PC-3 (cell line): ENCODE measurements at regions of chr19 and their contacts with region 1.

Region 1: DNA sequence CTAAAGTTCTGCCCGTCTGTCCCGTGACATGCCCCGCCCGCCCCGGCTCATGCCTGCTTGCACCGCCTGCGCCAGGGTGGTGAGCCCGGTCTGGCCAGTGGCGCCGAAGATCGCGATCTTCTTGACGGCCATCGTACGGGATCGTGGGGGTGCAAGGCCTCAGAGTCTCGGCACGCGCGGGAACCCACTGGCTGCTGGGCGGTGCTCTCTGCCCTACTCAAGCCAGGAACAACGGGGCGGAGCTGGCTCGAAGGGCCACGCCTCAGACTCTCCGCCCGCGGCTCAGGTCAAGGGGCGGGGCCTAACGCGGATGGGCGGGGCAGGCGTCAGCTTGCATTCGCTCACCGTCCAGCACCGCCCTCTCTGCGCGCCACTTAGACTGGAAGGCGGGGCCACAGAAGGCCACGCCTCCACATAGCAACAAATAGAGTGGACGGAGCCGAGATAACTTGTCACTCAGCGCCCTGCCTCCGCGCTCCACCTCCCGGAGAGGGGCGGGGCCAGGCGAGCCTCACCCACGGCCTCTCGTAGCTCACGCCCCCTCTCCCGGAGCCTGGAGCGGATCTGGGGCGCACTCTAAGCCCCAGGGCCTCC is at the start of gene BLVRB:
- DNase-seq: peak; percentile 99
- ATAC-seq: peak; percentile 85
- H3K4me3 ChIP-seq: peak within 1 kb of the TSS; percentile 89
- H3K27ac ChIP-seq: peak within 1 kb of the TSS; percentile 70
- H3K4me1 ChIP-seq: peaks cover 20% of the 10 kb centered on the region
- H3K27me3 ChIP-seq: no peaks in the 10 kb centered on the region
- CTCF ChIP-seq: no peak
- total RNA-seq, gene BLVRB: 196 and 246 TPM in 2 replicates

Region 2: DNA sequence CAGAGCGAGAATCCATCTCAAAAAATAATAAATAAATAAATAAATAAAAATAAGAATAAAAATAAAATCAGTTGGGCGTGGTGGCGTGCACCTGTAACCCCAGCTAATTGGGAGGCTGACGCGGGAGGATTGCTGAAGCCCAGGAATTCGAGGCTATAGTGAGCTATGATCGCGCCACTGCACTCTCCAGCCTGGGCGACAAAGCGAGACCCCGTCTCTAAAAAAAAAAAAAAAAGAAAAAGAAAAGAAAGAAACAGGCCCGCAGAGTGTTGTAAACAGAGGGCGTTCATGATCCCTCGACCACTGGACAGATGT is 45.2 kb before region 1 on chr19:
- CTCF ChIA-PET with region 1: interaction called, 6 read pairs
- POLR2A ChIA-PET with region 1: interaction called, 10 read pairs
- intact Hi-C with region 1: no loop called
- DNase-seq: no peak
- ATAC-seq: no peak
- H3K4me3 ChIP-seq: peak overlapping the region; percentile 76
- H3K27ac ChIP-seq: peak overlapping the region; percentile 70
- H3K4me1 ChIP-seq: peaks cover 10% of the 10 kb centered on the region
- H3K27me3 ChIP-seq: no peaks in the 10 kb centered on the region
- CTCF ChIP-seq: no peak

Region 3: GRCh38 chr19:40512473-40513344 is 47.1 kb after region 1 on chr19:
- CTCF ChIA-PET with region 1: no interaction called
- POLR2A ChIA-PET with region 1: no interaction called
- intact Hi-C with region 1: no loop called
- DNase-seq: no peak
- ATAC-seq: peak; percentile 35; the same call in 1 of the 2 replicates
- H3K4me3 ChIP-seq: no peak overlapping the region
- H3K27ac ChIP-seq: no peak overlapping the region
- H3K4me1 ChIP-seq: no peaks in the 10 kb centered on the region
- H3K27me3 ChIP-seq: no peaks in the 10 kb centered on the region
- CTCF ChIP-seq: no peak

Region 4: GRCh38 chr19:40523322-40524047 is 57.8 kb after region 1 on chr19:
- CTCF ChIA-PET with region 1: interaction called, 18 read pairs
- POLR2A ChIA-PET with region 1: no interaction called
- intact Hi-C with region 1: loop called (anchors 5 kb)
- DNase-seq: peak; percentile 66
- ATAC-seq: peak; percentile 78
- H3K4me3 ChIP-seq: no peak overlapping the region
- H3K27ac ChIP-seq: no peak overlapping the region
- H3K4me1 ChIP-seq: no peaks in the 10 kb centered on the region
- H3K27me3 ChIP-seq: no peaks in the 10 kb centered on the region
- CTCF ChIP-seq: peak; percentile 71

Region 5: GRCh38 chr19:40542202-40542859 is 76.7 kb after region 1 on chr19:
- CTCF ChIA-PET with region 1: interaction called, 14 read pairs
- POLR2A ChIA-PET with region 1: no interaction called
- intact Hi-C with region 1: no loop called
- DNase-seq: no peak
- ATAC-seq: no peak
- H3K4me3 ChIP-seq: no peak overlapping the region
- H3K27ac ChIP-seq: no peak overlapping the region
- H3K4me1 ChIP-seq: no peaks in the 10 kb centered on the region
- H3K27me3 ChIP-seq: no peaks in the 10 kb centered on the region
- CTCF ChIP-seq: no peak

Region 6: DNA sequence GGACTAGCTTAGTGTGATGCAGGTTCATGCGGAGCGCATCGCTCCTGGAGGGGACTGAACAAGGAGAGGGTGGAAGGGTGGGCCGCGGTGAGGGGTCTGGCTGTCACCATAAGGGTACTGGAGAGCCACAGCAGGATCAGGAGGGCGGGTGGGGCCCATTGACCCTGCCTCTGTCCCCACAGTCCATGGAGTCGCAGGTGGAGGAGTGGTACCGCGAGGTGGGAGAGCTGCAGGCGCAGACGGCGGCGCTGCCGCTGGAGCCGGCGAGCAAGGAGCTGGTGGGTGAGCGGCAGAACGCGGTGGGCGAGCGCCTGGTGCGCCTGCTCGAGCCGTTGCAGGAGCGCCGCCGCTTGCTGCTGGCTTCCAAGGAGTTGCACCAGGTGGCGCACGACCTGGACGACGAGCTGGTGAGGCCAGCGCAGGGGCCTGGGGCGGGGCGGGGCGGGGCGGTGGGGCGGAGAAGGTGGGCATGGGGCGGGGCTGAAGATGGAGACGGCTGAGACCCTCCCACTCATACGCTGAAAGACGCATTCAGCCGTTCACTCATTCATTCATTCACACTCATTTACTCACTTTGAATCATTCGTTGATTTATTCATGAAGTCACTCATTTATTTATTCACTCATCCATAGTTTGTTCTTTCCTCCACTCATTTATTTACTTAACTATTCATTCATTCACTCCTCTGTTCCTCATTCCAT is 83.5 kb after region 1 on chr19:
- CTCF ChIA-PET with region 1: interaction called, 11 read pairs
- POLR2A ChIA-PET with region 1: interaction called, 3 read pairs
- intact Hi-C with region 1: no loop called
- DNase-seq: peak; percentile 68
- ATAC-seq: peak; percentile 90
- H3K4me3 ChIP-seq: peak overlapping the region; percentile 49; the same call in 1 of the 2 replicates
- H3K27ac ChIP-seq: no peak overlapping the region
- H3K4me1 ChIP-seq: no peaks in the 10 kb centered on the region; the same call in 1 of the 2 replicates
- H3K27me3 ChIP-seq: no peaks in the 10 kb centered on the region
- CTCF ChIP-seq: peak; percentile 40; the same call in 1 of the 2 replicates

Region 7: DNA sequence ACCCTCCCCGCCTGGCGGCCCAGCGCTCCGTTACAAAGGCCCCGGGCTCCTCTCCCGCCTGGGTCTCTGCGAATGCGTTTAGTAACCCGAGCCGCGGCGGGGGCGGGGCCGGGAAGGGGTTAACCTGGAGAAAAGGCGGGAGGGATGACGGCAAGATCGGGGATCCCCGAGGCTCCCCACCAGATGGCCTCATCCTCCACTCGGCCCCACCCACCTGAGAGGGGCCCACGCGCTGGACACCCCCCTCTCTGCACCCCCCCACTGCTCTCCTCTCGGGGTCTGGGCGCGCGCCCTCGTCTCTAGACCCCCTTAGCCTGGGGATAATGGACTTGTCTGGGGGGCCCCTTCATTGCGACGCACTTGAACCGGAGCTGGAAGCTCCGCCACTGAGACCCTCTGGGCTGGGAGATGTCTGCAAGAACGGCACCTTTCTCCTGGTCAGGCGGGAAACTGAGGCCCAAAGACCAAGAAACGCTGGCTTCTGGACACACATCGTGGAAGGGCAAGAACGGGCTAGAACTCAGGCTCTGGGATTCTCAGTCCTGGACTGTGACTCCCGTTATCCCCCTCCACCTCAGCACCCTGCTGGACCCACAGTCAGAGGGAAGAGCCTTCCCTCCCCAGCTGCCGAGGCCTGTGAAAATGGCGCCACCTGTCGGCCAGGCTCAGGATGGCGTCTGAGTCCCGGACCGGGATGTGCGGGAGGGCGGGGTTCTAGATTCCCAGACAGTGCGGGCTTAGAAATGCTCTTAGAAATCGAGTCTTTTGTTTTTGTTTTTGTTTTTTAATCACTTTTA is 132.7 kb after region 1 on chr19:
- CTCF ChIA-PET with region 1: interaction called, 14 read pairs
- POLR2A ChIA-PET with region 1: no interaction called
- intact Hi-C with region 1: loop called (anchors 2 kb)
- DNase-seq: peak; percentile 89
- ATAC-seq: peak; percentile 49
- H3K4me3 ChIP-seq: peak overlapping the region; percentile 65
- H3K27ac ChIP-seq: 0 out of 2 replicates have a peak overlapping the region, but pooled peaks have one; percentile 9
- H3K4me1 ChIP-seq: peaks cover 34% of the 10 kb centered on the region
- H3K27me3 ChIP-seq: no peaks in the 10 kb centered on the region
- CTCF ChIP-seq: peak; percentile 92

Region 8: DNA sequence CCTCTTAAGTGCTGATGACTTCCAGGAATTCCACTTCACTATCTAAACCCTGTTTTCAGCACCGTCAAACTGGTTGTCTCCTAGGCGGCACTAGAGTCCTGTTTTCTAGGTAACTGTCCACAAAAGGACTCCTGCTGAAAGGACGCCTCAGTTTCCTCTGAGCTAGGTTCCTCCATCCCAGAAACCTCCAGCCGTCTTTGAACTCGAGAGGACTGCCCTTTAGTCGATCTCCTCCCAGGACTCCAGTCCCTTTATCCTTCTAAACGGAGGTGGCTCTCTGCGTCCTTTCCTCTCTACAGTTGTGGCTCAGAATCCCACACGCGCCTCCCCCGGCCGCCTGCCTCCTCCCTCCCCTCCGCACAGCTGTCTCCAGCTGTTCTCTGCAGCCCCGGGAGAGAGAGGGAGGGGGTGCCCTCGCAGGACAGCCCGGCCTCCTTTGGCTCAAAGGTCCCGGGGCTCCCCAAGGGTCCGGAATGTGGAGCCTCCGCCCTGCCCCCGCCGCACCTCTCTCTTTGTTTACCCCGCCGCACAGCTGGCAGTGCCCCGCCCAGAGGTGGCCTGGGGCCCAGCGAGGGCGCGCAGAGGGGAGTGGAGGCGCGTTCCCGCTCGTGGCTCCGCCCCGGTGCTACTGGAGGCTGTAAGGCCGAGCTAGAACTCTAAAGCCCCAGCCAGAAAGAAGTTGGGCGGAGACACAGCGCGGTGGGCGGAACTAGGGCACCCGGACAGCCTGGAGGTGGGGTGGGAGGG is 137.9 kb after region 1 on chr19:
- CTCF ChIA-PET with region 1: interaction called, 14 read pairs
- POLR2A ChIA-PET with region 1: interaction called, 4 read pairs
- intact Hi-C with region 1: loop called (anchors 2 kb)
- DNase-seq: peak; percentile 97
- ATAC-seq: peak; percentile 66
- H3K4me3 ChIP-seq: peak overlapping the region; percentile 68
- H3K27ac ChIP-seq: no peak overlapping the region
- H3K4me1 ChIP-seq: peaks cover 36% of the 10 kb centered on the region
- H3K27me3 ChIP-seq: no peaks in the 10 kb centered on the region
- CTCF ChIP-seq: no peak

Region 9: DNA sequence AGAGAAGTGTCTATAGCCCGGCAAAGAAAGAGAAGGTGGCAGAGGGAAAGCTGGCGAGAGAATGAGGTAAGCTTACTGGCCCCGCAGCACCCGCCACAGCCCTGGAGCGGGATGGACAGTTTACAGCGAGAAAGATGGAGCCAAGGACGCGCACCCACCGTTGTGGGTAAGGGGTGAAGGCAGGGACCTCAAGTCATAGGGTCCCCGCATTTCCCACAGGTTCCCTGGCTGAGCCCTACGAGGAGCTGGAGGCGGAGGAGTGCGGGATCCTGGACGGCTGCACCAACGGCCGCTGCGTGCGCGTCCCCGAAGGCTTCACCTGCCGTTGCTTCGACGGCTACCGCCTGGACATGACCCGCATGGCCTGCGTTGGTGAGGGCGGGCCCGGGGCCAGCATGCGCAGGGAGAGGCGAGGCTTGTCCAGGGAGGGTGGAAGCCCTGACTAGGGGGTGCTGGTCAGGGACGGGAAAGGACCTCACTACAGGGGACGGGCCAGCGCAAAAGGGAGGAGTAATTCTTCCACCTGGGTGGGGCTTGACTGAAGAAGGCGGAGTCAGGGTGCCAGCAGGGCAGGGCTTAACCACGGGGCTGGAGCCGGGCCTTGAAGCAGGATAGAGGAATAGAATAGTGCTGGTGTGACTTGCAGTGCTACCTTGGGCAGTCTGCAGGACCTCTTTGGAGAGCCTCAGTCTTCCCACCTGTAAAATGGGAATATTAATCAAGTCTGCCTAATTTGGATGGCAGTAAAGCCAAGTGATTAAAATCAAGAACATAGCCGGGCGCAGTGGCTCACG is 162.0 kb after region 1 on chr19:
- CTCF ChIA-PET with region 1: no interaction called
- POLR2A ChIA-PET with region 1: no interaction called
- intact Hi-C with region 1: no loop called
- DNase-seq: no peak
- ATAC-seq: no peak
- H3K4me3 ChIP-seq: no peak overlapping the region
- H3K27ac ChIP-seq: no peak overlapping the region
- H3K4me1 ChIP-seq: peaks cover 5% of the 10 kb centered on the region
- H3K27me3 ChIP-seq: no peaks in the 10 kb centered on the region
- CTCF ChIP-seq: no peak